ENCODE measurements at regions of chr11 and their contacts with region 1.

Region 1: GRCh38 chr11:82900277-82901164 is at the start of gene PRCP:
- DNase-seq: peak; percentile 99
- H3K4me3 ChIP-seq: peak within 1 kb of the TSS; percentile 51 to 86 (median 60)
- H3K27ac ChIP-seq: peak within 1 kb of the TSS; percentile 74 to 98 (median 95)
- H3K4me1 ChIP-seq: peaks cover 12 to 67% (median 53%) of the 10 kb centered on the region in 6 donors
- H3K27me3 ChIP-seq: peaks cover 0 to 25% (median 4%) of the 10 kb centered on the region in 7 donors
- CTCF ChIP-seq: peak in 4 of 11 experiments; percentile 17 to 38 (median 26)
- POLR2A ChIP-seq: peak in 1 of 3 donors; percentile 60
- total RNA-seq, gene PRCP: 54.5 to 85.7 (median 66.7) TPM

Region 2: DNA sequence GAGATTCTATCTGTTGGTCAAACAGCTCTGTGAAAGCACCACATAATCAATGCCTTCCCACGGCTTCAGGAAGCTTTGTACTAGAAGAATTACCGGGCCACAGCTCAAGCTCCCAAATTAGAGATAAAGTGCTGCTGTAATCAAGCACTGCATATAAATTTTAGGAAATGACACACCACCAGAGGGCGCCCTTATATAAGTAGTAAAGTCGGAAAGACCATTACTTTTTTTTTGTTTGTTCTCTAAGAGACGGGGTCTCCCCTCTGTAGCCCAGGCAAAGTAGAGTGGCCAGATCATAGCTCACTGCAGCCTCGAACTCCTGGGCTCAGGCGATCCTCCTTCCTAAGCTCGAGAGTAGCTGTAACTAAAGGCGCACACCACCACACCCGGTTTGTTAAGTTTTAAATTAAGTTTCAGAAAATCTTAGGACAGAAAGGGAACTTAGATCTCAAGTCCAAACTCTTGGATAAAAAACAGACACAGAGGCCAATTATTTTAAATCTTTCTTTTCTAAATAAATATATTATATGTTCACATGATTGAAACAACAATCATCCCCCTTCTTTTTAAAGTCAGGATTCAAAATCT is 32.9 kb before region 1 on chr11:
- intact Hi-C with region 1: loop called (anchors 5 kb)
- DNase-seq: peak; percentile 62
- H3K4me3 ChIP-seq: no peak overlapping the region
- H3K27ac ChIP-seq: peak overlapping the region in 1 of 8 donors; percentile 39
- H3K4me1 ChIP-seq: peaks cover 0 to 48% (median 10%) of the 10 kb centered on the region in 6 donors
- H3K27me3 ChIP-seq: peaks cover 0 to 8% (median 0%) of the 10 kb centered on the region in 7 donors
- CTCF ChIP-seq: peak; percentile 49 to 83 (median 68)
- POLR2A ChIP-seq: no peak

Region 3: GRCh38 chr11:83071567-83072349 is 171.2 kb after region 1 on chr11 and contains the start of gene RAB30:
- intact Hi-C with region 1: loop called (anchors 10 kb)
- DNase-seq: peak; percentile 96
- H3K4me3 ChIP-seq: peak within 1 kb of the TSS; percentile 57 to 75 (median 70)
- H3K27ac ChIP-seq: peak within 1 kb of the TSS; percentile 85 to 93 (median 92)
- H3K4me1 ChIP-seq: peaks cover 25 to 92% (median 53%) of the 10 kb centered on the region in 6 donors
- H3K27me3 ChIP-seq: peaks cover 0 to 18% (median 0%) of the 10 kb centered on the region in 7 donors
- CTCF ChIP-seq: peak in 2 of 11 experiments; percentile 7 to 19
- POLR2A ChIP-seq: peak; percentile 76 to 95 (median 87)
- total RNA-seq, gene RAB30: 15.5 to 42.8 (median 36.2) TPM

Region 4: DNA sequence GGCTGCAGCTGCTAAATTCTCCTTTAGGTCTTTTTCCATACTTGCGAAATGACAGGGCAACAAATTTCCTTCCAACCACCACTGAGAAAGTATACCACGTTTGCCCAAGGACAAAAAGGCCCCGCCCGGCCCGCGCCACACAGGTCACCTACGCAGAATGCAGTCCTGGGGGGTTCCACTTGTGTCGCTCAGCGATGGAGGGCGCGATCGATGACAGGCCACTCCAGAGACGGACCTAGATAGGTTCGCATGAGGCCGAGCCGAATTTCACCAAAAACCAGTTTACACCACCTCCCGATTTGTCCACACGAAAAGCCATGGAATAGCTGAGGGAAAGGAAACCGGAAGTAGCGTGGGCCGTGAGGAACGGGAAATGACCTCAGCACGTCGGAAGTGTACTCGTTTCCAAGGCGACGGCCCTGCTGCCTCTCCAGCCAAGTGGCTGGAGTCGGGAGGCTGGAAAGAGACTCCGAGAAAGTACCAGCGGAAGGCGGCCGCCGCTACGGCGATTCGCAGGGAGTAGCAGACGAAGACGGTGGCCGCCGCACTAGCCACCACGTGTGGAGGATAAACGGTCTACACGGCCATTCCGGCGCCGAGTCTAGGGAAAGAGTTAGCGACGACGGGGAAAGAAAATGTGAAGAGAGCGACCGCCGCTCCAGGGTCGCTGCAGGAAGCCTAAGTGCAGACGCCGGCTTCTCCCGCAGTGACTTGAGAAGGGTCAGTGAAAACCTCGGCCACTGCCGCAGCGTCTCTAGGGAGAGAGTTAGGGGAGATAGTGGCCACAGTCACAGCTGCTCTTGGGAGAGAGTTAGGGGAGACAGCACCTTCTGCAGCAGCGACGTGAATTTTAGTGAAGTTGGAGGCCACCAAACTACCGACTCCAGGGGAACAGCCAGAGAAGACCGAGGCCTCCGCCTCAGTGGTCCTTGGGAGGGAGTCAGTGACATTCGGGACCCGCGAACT is 293.1 kb after region 1 on chr11 and contains the start of gene ANKRD42:
- intact Hi-C with region 1: loop called (anchors 10 kb)
- DNase-seq: peak; percentile 96
- H3K4me3 ChIP-seq: peak within 1 kb of the TSS; percentile 64 to 99 (median 89)
- H3K27ac ChIP-seq: peak within 1 kb of the TSS; percentile 89 to 95 (median 92)
- H3K4me1 ChIP-seq: peaks cover 11 to 63% (median 40%) of the 10 kb centered on the region in 6 donors
- H3K27me3 ChIP-seq: no peaks in the 10 kb centered on the region
- CTCF ChIP-seq: peak in 6 of 11 experiments; percentile 14 to 44 (median 33)
- POLR2A ChIP-seq: peak in 2 of 3 donors; percentile 25 to 45
- total RNA-seq, gene ANKRD42: 5.9 to 8.6 (median 7.3) TPM

Region 5: GRCh38 chr11:83241291-83241946 is 340.9 kb after region 1 on chr11:
- intact Hi-C with region 1: loop called (anchors 10 kb)
- DNase-seq: no peak
- H3K4me3 ChIP-seq: no peak overlapping the region
- H3K27ac ChIP-seq: no peak overlapping the region
- H3K4me1 ChIP-seq: no peaks in the 10 kb centered on the region
- H3K27me3 ChIP-seq: no peaks in the 10 kb centered on the region
- CTCF ChIP-seq: peak in 9 of 11 experiments; percentile 13 to 56 (median 39)
- POLR2A ChIP-seq: no peak

Region 6: GRCh38 chr11:83424376-83425136 is 524.0 kb after region 1 on chr11:
- intact Hi-C with region 1: no loop called
- DNase-seq: no peak
- H3K4me3 ChIP-seq: no peak overlapping the region
- H3K27ac ChIP-seq: no peak overlapping the region
- H3K4me1 ChIP-seq: no peaks in the 10 kb centered on the region
- H3K27me3 ChIP-seq: no peaks in the 10 kb centered on the region
- CTCF ChIP-seq: no peak
- POLR2A ChIP-seq: no peak